WTC11 (cell line): ENCODE measurements at regions of chr3 and their contacts with region 1.

Region 1: GRCh38 chr3:56494686-56495322 is 26.5 kb upstream of the ERC2 start:
- DNase-seq: peak; percentile 80
- ATAC-seq: peak; percentile 99
- H3K4me3 Mint-ChIP-seq: no peak overlapping the region
- H3K27ac Mint-ChIP-seq: no peak overlapping the region
- H3K4me1 Mint-ChIP-seq: peaks cover 4% of the 10 kb centered on the region; the same call in 1 of the 2 replicates
- H3K27me3 Mint-ChIP-seq: peaks cover 23% of the 10 kb centered on the region
- CTCF ChIP-seq: peak; percentile 89

Region 2: DNA sequence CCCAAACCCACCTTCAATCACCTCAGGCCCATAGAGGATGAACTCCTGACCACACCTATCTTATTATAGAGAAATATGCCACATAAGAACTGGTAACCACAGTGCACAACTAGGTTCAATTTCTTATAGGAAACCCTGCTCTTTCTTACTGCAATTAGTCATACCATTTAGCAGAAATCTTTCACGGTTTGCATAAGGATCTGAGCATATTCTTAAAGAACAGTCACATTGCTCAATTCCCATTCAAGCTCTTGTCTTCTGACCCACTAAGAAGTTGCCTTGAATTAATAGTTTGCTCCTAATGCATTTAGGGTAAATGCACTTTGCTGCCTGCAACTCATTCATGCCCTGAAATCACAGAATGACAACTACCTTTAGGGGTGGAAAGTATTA is 35.7 kb before region 1 on chr3:
- CTCF ChIA-PET with region 1: interaction called, 13 read pairs
- POLR2A ChIA-PET with region 1: no interaction called
- DNase-seq: no peak
- ATAC-seq: no peak
- H3K4me3 Mint-ChIP-seq: no peak overlapping the region
- H3K27ac Mint-ChIP-seq: no peak overlapping the region
- H3K4me1 Mint-ChIP-seq: peaks cover 30% of the 10 kb centered on the region
- H3K27me3 Mint-ChIP-seq: no peaks in the 10 kb centered on the region
- CTCF ChIP-seq: no peak

Region 3: GRCh38 chr3:56467108-56467507 is 27.7 kb before region 1 on chr3:
- CTCF ChIA-PET with region 1: interaction called, 23 read pairs
- POLR2A ChIA-PET with region 1: no interaction called
- DNase-seq: peak; percentile 87
- ATAC-seq: peak; percentile 81
- H3K4me3 Mint-ChIP-seq: peak overlapping the region; percentile 95
- H3K27ac Mint-ChIP-seq: peak overlapping the region; percentile 63; the same call in 1 of the 2 replicates
- H3K4me1 Mint-ChIP-seq: peaks cover 9% of the 10 kb centered on the region
- H3K27me3 Mint-ChIP-seq: no peaks in the 10 kb centered on the region
- CTCF ChIP-seq: no peak

Region 4: GRCh38 chr3:56476771-56477170 is 18.0 kb before region 1 on chr3:
- CTCF ChIA-PET with region 1: interaction called, 23 read pairs
- POLR2A ChIA-PET with region 1: no interaction called
- DNase-seq: no peak
- ATAC-seq: no peak
- H3K4me3 Mint-ChIP-seq: no peak overlapping the region
- H3K27ac Mint-ChIP-seq: no peak overlapping the region
- H3K4me1 Mint-ChIP-seq: peaks cover 23% of the 10 kb centered on the region
- H3K27me3 Mint-ChIP-seq: no peaks in the 10 kb centered on the region; the same call in 1 of the 2 replicates
- CTCF ChIP-seq: no peak

Region 5: DNA sequence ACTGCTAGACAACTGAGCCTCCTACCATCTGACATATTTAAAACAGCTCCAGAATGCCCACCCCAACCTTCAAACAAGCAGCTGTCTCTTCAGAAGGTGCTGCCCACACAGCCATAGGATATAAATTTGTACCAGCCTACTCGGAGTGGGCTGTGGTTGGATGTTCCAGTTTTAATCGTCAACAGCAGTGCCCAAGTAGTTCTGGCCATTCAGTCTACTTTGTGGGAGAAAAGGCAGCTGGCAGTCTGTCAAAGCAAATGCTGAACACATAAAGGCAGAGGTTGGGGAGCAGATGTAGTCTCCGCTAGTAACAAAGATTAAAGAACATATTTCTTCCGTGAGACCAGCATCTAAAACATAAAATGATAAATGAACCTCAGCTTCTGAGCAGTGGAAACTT is 10.7 kb before region 1 on chr3:
- CTCF ChIA-PET with region 1: interaction called, 23 read pairs
- POLR2A ChIA-PET with region 1: no interaction called
- DNase-seq: no peak
- ATAC-seq: no peak
- H3K4me3 Mint-ChIP-seq: no peak overlapping the region
- H3K27ac Mint-ChIP-seq: no peak overlapping the region
- H3K4me1 Mint-ChIP-seq: peaks cover 3% of the 10 kb centered on the region; the same call in 1 of the 2 replicates
- H3K27me3 Mint-ChIP-seq: no peaks in the 10 kb centered on the region; the same call in 1 of the 2 replicates
- CTCF ChIP-seq: no peak

Region 6: GRCh38 chr3:56556908-56557830 is 62.4 kb after region 1 on chr3 and contains the start of gene CCDC66:
- CTCF ChIA-PET with region 1: interaction called, 10 read pairs
- POLR2A ChIA-PET with region 1: no interaction called
- DNase-seq: peak; percentile 92
- ATAC-seq: peak; percentile 99
- H3K4me3 Mint-ChIP-seq: peak within 1 kb of the TSS; percentile 98
- H3K27ac Mint-ChIP-seq: peak within 1 kb of the TSS; percentile 98
- H3K4me1 Mint-ChIP-seq: peaks cover 7% of the 10 kb centered on the region
- H3K27me3 Mint-ChIP-seq: peaks cover 4% of the 10 kb centered on the region
- CTCF ChIP-seq: peak; percentile 40
- total RNA-seq, gene CCDC66: 17.9 to 23.0 TPM (median 19.4 TPM) in 3 replicates